ENCODE measurements at regions of chr18 and their contacts with region 1.

Region 1: DNA sequence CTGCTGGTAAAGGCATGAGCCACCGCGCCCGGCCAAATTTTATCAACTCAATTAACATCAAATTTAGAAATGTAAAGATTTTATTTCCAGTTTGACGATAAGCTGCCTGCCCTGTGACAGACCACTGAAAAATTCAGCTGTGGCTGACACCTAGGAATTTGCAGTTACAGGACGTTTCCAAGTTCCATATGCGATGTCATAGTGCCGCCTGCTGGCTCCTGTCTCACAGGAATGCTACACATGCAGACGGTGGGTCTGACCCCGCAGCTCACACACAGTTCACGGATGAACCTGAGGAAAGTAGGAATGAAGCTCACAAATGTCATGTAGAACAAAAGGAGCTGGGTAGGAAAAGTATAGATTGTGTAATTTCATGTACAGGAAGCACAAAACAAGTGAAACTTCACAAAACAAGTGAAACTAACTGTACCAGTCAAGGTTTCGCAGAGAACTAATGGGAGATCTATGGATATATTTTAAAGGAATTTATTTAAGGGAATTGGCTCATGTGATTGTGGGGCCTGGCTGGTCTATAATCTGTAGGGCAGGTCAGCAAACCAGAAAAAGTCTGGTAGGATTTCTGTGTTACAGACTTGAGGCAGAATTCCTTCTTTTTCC is 13.2 kb upstream of the SEH1L start:
- DNase-seq: peak; percentile 78
- H3K4me3 ChIP-seq: peak overlapping the region in 1 of 2 experiments; percentile 33; a peak in 1 of 4 replicates
- H3K27ac ChIP-seq: no peak overlapping the region
- H3K4me1 ChIP-seq: no peaks in the 10 kb centered on the region
- H3K27me3 ChIP-seq: no peaks in the 10 kb centered on the region
- CTCF ChIP-seq: peak; percentile 96
- EP300 ChIP-seq: no peak
- RAD21 ChIP-seq: peak; percentile 100

Region 2: DNA sequence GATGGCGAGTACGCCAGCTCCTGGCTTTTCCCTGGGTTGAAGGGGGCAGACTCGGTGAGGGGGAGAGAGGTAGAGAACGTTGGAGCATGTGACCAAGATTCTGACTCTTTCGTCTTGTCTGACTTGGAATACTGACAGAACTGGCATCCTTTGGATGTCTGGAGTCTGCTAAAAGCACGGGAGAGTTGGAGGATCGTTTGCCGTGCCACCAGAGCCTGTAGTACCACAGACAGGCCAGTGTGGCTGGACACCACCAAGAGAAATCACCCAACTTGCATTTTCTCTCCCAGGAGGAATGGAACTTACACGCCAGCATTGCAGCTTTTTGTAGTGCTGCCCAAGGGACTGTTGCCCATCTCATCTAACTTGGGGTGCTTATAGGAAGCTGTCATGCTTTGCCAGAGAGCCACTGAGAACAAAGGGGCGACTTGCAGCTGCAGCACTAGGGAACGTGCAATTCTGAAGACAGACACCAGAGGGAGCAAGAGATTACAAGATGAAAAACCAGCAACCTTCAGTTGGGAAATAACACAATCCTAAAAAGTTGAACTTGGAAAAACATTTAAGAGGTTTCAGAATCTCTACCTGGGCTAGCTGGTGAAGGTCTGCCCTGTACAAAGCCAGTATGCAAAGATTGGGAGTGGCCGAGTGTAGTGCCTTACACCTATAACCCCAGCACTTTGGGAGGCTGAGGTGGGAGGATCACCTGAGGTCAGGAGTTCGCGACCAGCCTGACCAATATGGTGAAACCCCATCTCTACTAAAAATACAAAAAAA is 207.6 kb before region 1 on chr18:
- CTCF ChIA-PET with region 1: interaction called, 175 read pairs
- POLR2A ChIA-PET with region 1: no interaction called
- DNase-seq: peak; percentile 69
- H3K4me3 ChIP-seq: no peak overlapping the region; a peak in 1 of 4 replicates
- H3K27ac ChIP-seq: no peak overlapping the region
- H3K4me1 ChIP-seq: no peaks in the 10 kb centered on the region; a peak in 1 of 4 replicates
- H3K27me3 ChIP-seq: no peaks in the 10 kb centered on the region
- CTCF ChIP-seq: peak; percentile 89
- EP300 ChIP-seq: no peak
- RAD21 ChIP-seq: peak; percentile 89

Region 3: GRCh38 chr18:12750076-12750714 is 184.4 kb before region 1 on chr18:
- CTCF ChIA-PET with region 1: interaction called, 124 read pairs
- POLR2A ChIA-PET with region 1: no interaction called
- DNase-seq: no peak
- H3K4me3 ChIP-seq: no peak overlapping the region
- H3K27ac ChIP-seq: no peak overlapping the region
- H3K4me1 ChIP-seq: peaks cover 0 to 7% of the 10 kb centered on the region in 2 experiments; a peak in 2 of 4 replicates
- H3K27me3 ChIP-seq: no peaks in the 10 kb centered on the region
- CTCF ChIP-seq: no peak
- EP300 ChIP-seq: no peak
- RAD21 ChIP-seq: no peak

Region 4: DNA sequence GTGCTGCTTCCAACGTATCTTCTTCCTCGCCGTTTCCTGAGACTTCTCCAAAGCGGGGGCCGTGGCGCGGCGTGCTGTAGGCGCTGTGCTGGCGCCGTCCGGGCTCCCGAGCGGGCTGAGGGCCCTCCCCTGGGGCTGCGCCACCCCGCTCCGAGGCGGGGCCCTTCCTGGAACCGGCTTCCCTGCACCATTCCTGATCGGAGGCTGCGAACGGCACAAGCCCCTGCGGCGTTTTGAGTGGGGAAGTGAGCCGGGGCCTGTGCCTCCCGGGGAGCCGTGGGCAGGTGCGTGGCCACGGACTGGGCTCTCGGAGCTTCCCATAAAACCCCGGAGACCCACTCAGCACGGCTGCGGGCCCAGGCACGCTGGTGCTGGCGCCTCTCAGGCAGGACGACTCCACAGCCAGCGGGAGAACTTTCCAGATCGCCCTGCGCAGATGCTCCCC is 157.0 kb before region 1 on chr18:
- CTCF ChIA-PET with region 1: interaction called, 10 read pairs
- POLR2A ChIA-PET with region 1: no interaction called
- DNase-seq: no peak
- H3K4me3 ChIP-seq: no peak overlapping the region
- H3K27ac ChIP-seq: no peak overlapping the region
- H3K4me1 ChIP-seq: no peaks in the 10 kb centered on the region
- H3K27me3 ChIP-seq: no peaks in the 10 kb centered on the region
- CTCF ChIP-seq: no peak
- EP300 ChIP-seq: no peak
- RAD21 ChIP-seq: no peak

Region 5: DNA sequence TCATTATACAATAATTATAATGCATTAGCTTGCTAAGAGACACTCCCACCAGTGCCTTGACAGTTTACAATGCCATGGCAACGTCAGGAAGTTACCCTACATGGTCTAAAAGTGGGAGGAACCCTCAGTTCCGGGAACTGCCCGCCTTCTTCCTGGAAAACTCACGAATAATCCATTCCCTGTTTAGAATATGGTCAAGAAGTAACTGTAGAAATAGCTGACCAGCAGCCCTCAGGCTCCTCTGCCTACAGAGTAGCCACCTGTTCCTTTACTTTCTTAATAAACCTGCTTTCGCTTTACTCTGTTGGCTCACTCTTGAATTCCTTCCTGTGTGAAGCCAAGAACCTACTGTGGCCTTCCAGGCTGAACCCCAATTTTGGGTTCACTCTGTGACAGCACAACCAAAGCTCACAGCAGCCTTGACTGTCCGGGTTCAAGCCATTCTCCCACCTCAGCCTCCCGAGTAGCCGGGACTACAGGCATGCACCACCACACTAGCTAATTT is 30.5 kb before region 1 on chr18:
- CTCF ChIA-PET with region 1: interaction called, 15 read pairs
- POLR2A ChIA-PET with region 1: no interaction called
- DNase-seq: no peak
- H3K4me3 ChIP-seq: no peak overlapping the region
- H3K27ac ChIP-seq: no peak overlapping the region
- H3K4me1 ChIP-seq: peaks cover 0 to 7% of the 10 kb centered on the region in 2 experiments; a peak in 2 of 4 replicates
- H3K27me3 ChIP-seq: no peaks in the 10 kb centered on the region
- CTCF ChIP-seq: no peak
- EP300 ChIP-seq: no peak
- RAD21 ChIP-seq: no peak

Region 6: GRCh38 chr18:12921178-12921577 is 13.4 kb before region 1 on chr18:
- CTCF ChIA-PET with region 1: interaction called, 19 read pairs
- POLR2A ChIA-PET with region 1: no interaction called
- DNase-seq: no peak
- H3K4me3 ChIP-seq: no peak overlapping the region
- H3K27ac ChIP-seq: no peak overlapping the region
- H3K4me1 ChIP-seq: no peaks in the 10 kb centered on the region; a peak in 1 of 4 replicates
- H3K27me3 ChIP-seq: no peaks in the 10 kb centered on the region
- CTCF ChIP-seq: no peak
- EP300 ChIP-seq: no peak
- RAD21 ChIP-seq: no peak

Region 7: DNA sequence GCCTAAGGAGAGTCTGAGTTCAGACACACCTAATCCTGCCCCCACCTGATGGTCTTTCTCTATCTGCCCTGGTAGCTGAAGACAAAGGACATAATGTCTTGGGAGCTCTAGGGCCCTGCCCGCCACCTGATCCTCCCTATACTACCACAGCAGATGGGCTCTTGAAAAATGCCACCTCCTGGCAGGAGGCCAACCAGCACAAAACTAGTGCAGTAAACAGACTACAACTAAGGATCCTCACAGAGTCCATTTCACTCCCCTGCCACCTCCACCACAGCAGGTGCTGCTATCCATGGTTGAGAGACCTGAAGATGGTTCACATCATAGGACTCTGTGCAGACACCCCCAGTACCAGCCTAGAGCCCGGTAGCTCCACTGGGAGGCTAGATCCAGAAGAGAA is 231.5 kb after region 1 on chr18:
- CTCF ChIA-PET with region 1: no interaction called
- POLR2A ChIA-PET with region 1: no interaction called
- DNase-seq: no peak
- H3K4me3 ChIP-seq: no peak overlapping the region
- H3K27ac ChIP-seq: no peak overlapping the region
- H3K4me1 ChIP-seq: no peaks in the 10 kb centered on the region; a peak in 1 of 4 replicates
- H3K27me3 ChIP-seq: no peaks in the 10 kb centered on the region
- CTCF ChIP-seq: no peak
- EP300 ChIP-seq: no peak
- RAD21 ChIP-seq: no peak

Measured in SK-N-SH (cell line).